Gastrocnemius medialis (tissue), 4 donors: ENCODE measurements at regions of chr1 and their contacts with region 1.

Region 1: DNA sequence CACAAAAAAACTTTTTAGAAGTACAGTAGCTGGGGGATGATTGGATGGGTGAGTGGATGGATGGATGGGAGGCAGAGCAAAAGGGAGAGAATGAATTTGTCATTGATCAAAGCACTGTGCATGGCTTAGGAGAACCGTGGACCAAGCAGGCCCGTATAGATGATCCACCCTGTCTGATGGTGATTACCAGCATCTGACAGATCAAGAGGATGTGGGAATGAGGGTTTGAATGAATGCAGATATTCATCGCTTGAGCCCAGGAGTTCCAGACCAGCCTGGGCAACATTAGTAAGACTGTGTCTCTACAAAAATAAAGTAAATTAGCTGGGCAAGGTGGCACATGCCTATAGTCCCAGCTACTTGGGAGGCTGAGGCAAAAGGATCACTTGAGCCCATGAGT is 190.6 kb downstream of the PBX1 start:
- DNase-seq: no peak
- ATAC-seq: no peak
- H3K4me3 ChIP-seq: no peak overlapping the region
- H3K27ac ChIP-seq: peak overlapping the region; percentile 80 to 90 (median 84)
- H3K4me1 ChIP-seq: peaks cover 59 to 61% of the 10 kb centered on the region in 2 donors
- H3K27me3 ChIP-seq: no peaks in the 10 kb centered on the region
- CTCF ChIP-seq: no peak
- POLR2A ChIP-seq: no peak

Region 2: GRCh38 chr1:163820766-163821165 is 928.9 kb before region 1 on chr1:
- in situ Hi-C with region 1: no loop called
- intact Hi-C with region 1: no loop called
- DNase-seq: no peak
- ATAC-seq: no peak
- H3K4me3 ChIP-seq: no peak overlapping the region
- H3K27ac ChIP-seq: no peak overlapping the region
- H3K4me1 ChIP-seq: no peaks in the 10 kb centered on the region
- H3K27me3 ChIP-seq: no peaks in the 10 kb centered on the region
- CTCF ChIP-seq: peak in 2 of 5 experiments; percentile 7 to 14
- POLR2A ChIP-seq: no peak

Region 3: DNA sequence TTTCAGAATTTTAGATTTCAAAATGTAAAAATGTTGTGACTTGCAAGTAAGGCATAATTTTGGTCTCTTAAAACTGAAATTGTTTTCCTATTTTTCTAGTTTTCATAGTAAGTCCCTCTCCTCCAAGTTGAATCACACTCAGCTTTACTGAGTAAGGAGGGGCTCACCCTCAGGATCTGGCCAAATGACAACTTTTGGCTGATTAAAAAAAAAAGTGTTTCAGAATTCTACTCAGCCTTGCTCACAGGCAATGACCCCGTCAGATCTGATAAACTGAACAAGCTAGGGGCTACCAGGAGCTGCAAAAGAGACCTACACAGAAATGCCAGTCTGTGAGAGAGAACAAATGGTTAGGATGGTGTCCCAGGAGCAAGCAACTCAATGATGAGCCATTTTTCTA is 30.8 kb before region 1 on chr1:
- in situ Hi-C with region 1: no loop called
- intact Hi-C with region 1: loop called (anchors 2 kb)
- DNase-seq: no peak
- ATAC-seq: no peak
- H3K4me3 ChIP-seq: no peak overlapping the region
- H3K27ac ChIP-seq: peak overlapping the region in 2 of 4 donors; percentile 83 to 86
- H3K4me1 ChIP-seq: peaks cover 69 to 76% of the 10 kb centered on the region in 2 donors
- H3K27me3 ChIP-seq: no peaks in the 10 kb centered on the region
- CTCF ChIP-seq: no peak
- POLR2A ChIP-seq: no peak

Region 4: DNA sequence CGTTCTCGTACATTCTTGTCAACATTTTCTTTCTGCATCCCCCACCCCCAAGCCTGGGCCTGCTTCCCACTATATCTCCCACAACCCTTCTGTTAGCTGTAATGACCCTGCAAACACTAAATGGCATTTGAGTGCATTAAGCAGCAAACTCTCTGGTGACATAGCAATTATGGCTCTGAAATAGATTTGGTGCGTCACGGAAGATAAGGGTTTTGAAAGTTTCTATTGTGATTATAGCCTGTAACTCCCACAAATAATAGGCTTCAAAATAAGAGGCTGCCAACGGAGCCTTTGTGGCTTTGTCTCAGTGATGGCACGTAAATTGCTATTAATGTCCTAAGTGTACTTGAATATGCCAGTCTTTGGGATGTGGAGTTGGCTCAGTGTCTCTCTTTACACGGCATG is 87.0 kb after region 1 on chr1:
- in situ Hi-C with region 1: no loop called
- intact Hi-C with region 1: no loop called
- DNase-seq: no peak
- ATAC-seq: no peak
- H3K4me3 ChIP-seq: no peak overlapping the region
- H3K27ac ChIP-seq: no peak overlapping the region
- H3K4me1 ChIP-seq: no peaks in the 10 kb centered on the region
- H3K27me3 ChIP-seq: no peaks in the 10 kb centered on the region
- CTCF ChIP-seq: no peak
- POLR2A ChIP-seq: no peak